CD8-positive, alpha-beta T cell (primary cell): ENCODE measurements at regions of chr7 and their contacts with region 1.

Region 1: GRCh38 chr7:47979145-47979831 is at the start of gene HUS1:
- DNase-seq: peak; percentile 85 to 95 (median 90)
- ATAC-seq: peak; percentile 98
- H3K4me3 ChIP-seq: peak within 1 kb of the TSS; percentile 83 to 86
- H3K4me3 Mint-ChIP-seq: peak within 1 kb of the TSS; percentile 94
- H3K27ac ChIP-seq: peak within 1 kb of the TSS; percentile 93 to 96
- H3K27ac Mint-ChIP-seq: peak within 1 kb of the TSS; percentile 99
- H3K4me1 ChIP-seq: peaks cover 13% of the 10 kb centered on the region
- H3K4me1 Mint-ChIP-seq: peaks cover 26% of the 10 kb centered on the region
- H3K27me3 ChIP-seq: no peaks in the 10 kb centered on the region
- H3K27me3 Mint-ChIP-seq: no peaks in the 10 kb centered on the region
- CTCF ChIP-seq: no peak
- total RNA-seq, gene HUS1: 73.4 to 82.9 TPM

Region 2: DNA sequence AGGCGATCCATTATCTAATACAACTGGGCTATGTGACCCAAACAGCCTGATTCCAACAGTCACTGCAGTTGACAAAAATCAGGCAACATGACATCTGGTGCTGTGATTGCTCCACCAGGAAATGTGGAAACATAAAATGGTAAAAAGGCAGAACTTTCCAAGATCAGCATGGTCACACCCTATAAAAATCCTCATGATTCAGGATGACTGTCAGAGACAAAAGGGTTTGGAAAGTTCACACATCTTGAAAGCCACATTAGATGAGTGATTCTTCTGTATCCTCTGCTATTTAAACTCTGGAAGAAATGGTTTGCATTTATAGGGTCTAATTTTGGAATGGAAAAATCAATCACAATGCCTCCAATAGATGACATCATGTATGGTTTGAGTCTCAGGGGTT is 1395.6 kb before region 1 on chr7:
- CTCF ChIA-PET with region 1: no interaction called
- POLR2A ChIA-PET with region 1: no interaction called
- intact Hi-C with region 1: no loop called
- DNase-seq: no peak
- ATAC-seq: no peak
- H3K4me3 ChIP-seq: no peak overlapping the region
- H3K4me3 Mint-ChIP-seq: no peak overlapping the region
- H3K27ac ChIP-seq: no peak overlapping the region
- H3K27ac Mint-ChIP-seq: no peak overlapping the region
- H3K4me1 ChIP-seq: no peaks in the 10 kb centered on the region
- H3K4me1 Mint-ChIP-seq: no peaks in the 10 kb centered on the region
- H3K27me3 ChIP-seq: no peaks in the 10 kb centered on the region
- H3K27me3 Mint-ChIP-seq: no peaks in the 10 kb centered on the region
- CTCF ChIP-seq: no peak

Region 3: DNA sequence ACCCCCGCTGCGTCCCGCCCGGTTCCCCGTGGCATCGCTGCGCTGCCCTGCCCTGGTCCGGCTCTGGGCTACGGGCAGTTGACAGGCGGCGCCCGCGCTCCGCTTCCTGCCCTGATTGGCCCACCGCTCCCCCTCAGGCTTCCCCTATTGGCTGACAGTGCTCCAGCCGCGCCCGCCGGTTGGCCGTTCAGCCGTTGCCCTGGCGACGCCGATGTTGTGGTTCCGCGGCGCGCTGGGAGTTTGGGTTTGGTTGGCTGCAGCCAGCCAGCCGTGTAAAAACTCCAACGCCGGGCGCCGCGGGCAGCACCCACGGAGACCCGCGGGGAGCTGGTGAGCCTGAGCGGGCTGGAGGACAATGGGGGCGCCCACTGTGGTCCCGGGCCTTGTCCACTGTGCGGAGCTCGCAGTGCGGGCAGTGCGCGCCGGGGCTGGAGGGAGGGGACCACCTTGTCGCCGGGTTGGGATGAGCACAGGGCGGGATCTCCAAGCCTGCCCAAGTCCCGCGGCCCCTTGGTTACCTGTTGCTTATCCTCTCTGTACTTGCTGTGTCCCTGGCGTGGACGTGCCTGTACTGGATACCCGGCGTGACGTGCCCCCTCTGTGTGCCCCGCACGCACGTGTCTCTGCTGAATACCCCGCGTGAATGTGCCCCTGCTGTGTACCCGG is 56.1 kb after region 1 on chr7 and contains the start of gene C7orf57:
- CTCF ChIA-PET with region 1: no interaction called
- POLR2A ChIA-PET with region 1: no interaction called
- intact Hi-C with region 1: loop called in 1 of 2 experiments (anchors 1 kb)
- DNase-seq: peak; percentile 69 to 91 (median 85)
- ATAC-seq: peak; percentile 86
- H3K4me3 ChIP-seq: peak within 1 kb of the TSS; percentile 57 to 73
- H3K4me3 Mint-ChIP-seq: peak within 1 kb of the TSS; percentile 81
- H3K27ac ChIP-seq: peak within 1 kb of the TSS in 1 of 2 experiments; percentile 37
- H3K27ac Mint-ChIP-seq: no peak within 1 kb of the TSS
- H3K4me1 ChIP-seq: peaks cover 8% of the 10 kb centered on the region
- H3K4me1 Mint-ChIP-seq: peaks cover 10% of the 10 kb centered on the region
- H3K27me3 ChIP-seq: peaks cover 8 to 10% of the 10 kb centered on the region in 2 experiments
- H3K27me3 Mint-ChIP-seq: peaks cover 13% of the 10 kb centered on the region
- CTCF ChIP-seq: no peak
- total RNA-seq, gene C7orf57: not detected

Region 4: DNA sequence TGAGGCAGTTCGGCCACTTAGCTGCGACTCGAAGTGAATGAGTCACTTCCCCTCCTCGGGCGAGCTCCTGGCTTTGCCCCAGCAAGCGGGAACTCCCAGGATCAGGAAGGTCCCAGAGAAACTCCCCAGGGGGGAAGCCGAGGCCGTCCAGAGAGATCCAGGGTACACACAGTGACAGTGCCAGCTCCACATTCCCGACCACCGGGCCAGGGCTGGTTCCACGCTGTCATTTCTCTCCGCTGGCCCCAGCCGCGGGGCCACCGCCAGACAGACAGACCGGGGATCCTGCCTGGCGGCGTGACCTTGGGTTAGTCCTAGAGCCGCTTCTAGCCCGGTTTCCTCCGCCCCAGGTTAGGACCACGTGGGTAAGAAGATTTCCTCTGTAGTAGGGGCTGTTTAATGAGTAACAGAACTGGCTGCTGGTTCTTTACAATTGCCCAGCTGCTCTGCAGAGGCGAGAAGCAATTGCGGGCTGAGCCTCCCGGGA is 109.3 kb after region 1 on chr7:
- CTCF ChIA-PET with region 1: no interaction called
- POLR2A ChIA-PET with region 1: interaction called, 8 read pairs
- intact Hi-C with region 1: loop called (anchors 1 kb)
- DNase-seq: no peak
- ATAC-seq: no peak
- H3K4me3 ChIP-seq: peak overlapping the region; percentile 87 to 92
- H3K4me3 Mint-ChIP-seq: peak overlapping the region; percentile 89
- H3K27ac ChIP-seq: peak overlapping the region; percentile 85 to 86
- H3K27ac Mint-ChIP-seq: peak overlapping the region; percentile 94
- H3K4me1 ChIP-seq: peaks cover 71% of the 10 kb centered on the region
- H3K4me1 Mint-ChIP-seq: peaks cover 75% of the 10 kb centered on the region
- H3K27me3 ChIP-seq: no peaks in the 10 kb centered on the region
- H3K27me3 Mint-ChIP-seq: no peaks in the 10 kb centered on the region
- CTCF ChIP-seq: no peak